MCF 10A (cell line): ENCODE measurements at regions of chr1 and their contacts with region 1.

Region 1: GRCh38 chr1:17335821-17336710 is 28.1 kb downstream of the PADI4 start:
- DNase-seq: peak; percentile 88
- H3K4me3 Mint-ChIP-seq: no peak overlapping the region
- H3K27ac Mint-ChIP-seq: no peak overlapping the region
- H3K4me1 Mint-ChIP-seq: peaks cover 17% of the 10 kb centered on the region
- H3K27me3 Mint-ChIP-seq: no peaks in the 10 kb centered on the region
- CTCF ChIP-seq: peak; percentile 81

Region 2: GRCh38 chr1:17250601-17251000 is 85.5 kb before region 1 on chr1:
- CTCF ChIA-PET with region 1: interaction called, 5 read pairs
- POLR2A ChIA-PET with region 1: no interaction called
- intact Hi-C with region 1: loop called (anchors 5 kb)
- DNase-seq: peak; percentile 97
- H3K4me3 Mint-ChIP-seq: no peak overlapping the region
- H3K27ac Mint-ChIP-seq: peak overlapping the region; percentile 61
- H3K4me1 Mint-ChIP-seq: peaks cover 23% of the 10 kb centered on the region
- H3K27me3 Mint-ChIP-seq: no peaks in the 10 kb centered on the region
- CTCF ChIP-seq: no peak

Region 3: DNA sequence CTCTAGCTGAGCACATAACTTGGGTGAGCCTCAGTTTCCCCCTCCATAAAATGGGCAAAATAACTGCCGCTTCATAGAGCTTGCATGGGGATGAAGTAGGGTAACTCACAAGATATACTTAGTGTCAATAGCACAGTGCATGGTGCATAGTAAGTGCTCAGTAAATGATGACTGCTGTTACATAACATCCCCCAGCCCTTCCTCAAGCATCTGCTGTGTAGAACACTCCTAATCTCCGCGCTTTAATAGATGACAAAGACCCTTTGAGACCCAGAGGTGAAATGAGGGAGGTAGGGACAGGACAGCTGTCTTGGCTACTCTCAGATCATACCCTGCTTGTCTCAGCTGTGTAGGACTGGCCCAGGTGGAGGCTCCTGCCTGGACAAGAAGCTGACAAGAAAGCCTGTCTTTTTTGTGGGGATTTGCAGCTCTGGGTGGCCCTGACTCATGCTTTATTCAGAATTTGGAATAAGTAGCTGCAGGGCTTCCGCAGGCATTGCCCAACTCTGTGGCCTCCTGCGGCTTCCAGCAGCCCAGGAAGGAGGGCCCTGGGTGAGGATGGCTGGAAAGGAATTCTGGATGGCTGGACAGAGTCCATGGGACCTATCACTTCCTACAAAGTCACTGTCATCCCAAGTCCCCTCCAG is 48.8 kb before region 1 on chr1:
- CTCF ChIA-PET with region 1: interaction called, 9 read pairs
- POLR2A ChIA-PET with region 1: interaction called, 4 read pairs
- intact Hi-C with region 1: loop called (anchors 1 kb)
- DNase-seq: peak; percentile 96
- H3K4me3 Mint-ChIP-seq: no peak overlapping the region
- H3K27ac Mint-ChIP-seq: no peak overlapping the region
- H3K4me1 Mint-ChIP-seq: peaks cover 15% of the 10 kb centered on the region
- H3K27me3 Mint-ChIP-seq: no peaks in the 10 kb centered on the region
- CTCF ChIP-seq: no peak

Region 4: DNA sequence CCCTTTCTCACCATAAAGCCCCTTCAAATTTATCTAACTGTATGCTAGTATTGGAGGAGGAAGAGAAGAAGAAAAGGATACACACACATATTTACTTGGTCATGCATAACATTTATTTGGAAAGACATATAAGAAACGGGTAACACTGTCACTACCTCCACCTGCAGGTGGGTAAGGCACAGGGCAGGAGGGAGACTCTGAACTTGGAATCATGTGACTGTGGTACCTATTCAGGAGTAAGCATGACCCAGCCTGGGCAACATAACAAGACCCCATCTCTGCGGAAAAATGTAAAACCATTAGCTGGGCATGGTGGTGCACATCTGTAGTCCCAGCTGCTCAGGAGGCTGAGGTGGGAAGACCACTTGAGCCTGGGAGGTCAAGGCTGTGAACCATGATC is 34.6 kb after region 1 on chr1:
- CTCF ChIA-PET with region 1: interaction called, 3 read pairs
- POLR2A ChIA-PET with region 1: no interaction called
- intact Hi-C with region 1: loop called (anchors 1 kb)
- DNase-seq: peak; percentile 56
- H3K4me3 Mint-ChIP-seq: no peak overlapping the region
- H3K27ac Mint-ChIP-seq: no peak overlapping the region
- H3K4me1 Mint-ChIP-seq: peaks cover 16% of the 10 kb centered on the region
- H3K27me3 Mint-ChIP-seq: no peaks in the 10 kb centered on the region
- CTCF ChIP-seq: peak; percentile 49

Region 5: GRCh38 chr1:17520071-17520813 is 184.2 kb after region 1 on chr1:
- CTCF ChIA-PET with region 1: no interaction called
- POLR2A ChIA-PET with region 1: no interaction called
- intact Hi-C with region 1: no loop called
- DNase-seq: peak; percentile 57
- H3K4me3 Mint-ChIP-seq: peak overlapping the region; percentile 16
- H3K27ac Mint-ChIP-seq: peak overlapping the region; percentile 33
- H3K4me1 Mint-ChIP-seq: peaks cover 8% of the 10 kb centered on the region
- H3K27me3 Mint-ChIP-seq: no peaks in the 10 kb centered on the region
- CTCF ChIP-seq: no peak

Region 6: DNA sequence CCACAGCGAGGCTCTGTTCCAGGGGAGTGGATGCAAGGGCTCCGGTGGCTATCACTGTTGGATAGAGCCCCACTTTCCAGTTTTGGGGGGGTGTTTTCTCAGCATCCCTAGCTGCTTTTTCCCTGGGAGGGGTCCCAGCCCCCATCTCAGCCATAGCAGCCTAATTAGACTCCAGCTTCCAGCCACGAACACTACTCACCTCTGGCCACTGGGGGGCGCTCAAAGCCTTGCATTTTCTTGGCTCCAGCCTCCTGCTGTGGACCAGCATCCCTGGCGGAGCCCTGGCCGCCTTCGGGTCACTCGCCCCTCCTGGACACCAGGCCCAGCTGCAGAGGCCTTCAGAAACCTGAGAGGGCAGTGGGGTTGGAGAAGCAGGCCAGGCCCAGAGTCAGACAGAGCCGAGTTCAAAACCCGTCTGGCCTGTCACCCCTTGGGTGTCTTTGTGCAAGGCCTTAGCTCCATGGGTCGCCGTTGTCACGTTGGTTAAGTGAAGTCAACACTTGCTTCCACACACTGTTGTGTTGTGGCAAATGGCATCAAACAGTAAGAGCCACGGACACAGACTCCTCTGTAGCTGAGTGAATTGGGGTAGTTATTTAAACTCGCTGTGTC is 325.6 kb after region 1 on chr1:
- CTCF ChIA-PET with region 1: no interaction called
- POLR2A ChIA-PET with region 1: no interaction called
- intact Hi-C with region 1: no loop called
- DNase-seq: peak; percentile 73
- H3K4me3 Mint-ChIP-seq: no peak overlapping the region
- H3K27ac Mint-ChIP-seq: no peak overlapping the region
- H3K4me1 Mint-ChIP-seq: no peaks in the 10 kb centered on the region
- H3K27me3 Mint-ChIP-seq: no peaks in the 10 kb centered on the region
- CTCF ChIP-seq: peak; percentile 93